Naive thymus-derived CD4-positive, alpha-beta T cell (primary cell): ENCODE measurements at regions of chr7 and their contacts with region 1.

Region 1: DNA sequence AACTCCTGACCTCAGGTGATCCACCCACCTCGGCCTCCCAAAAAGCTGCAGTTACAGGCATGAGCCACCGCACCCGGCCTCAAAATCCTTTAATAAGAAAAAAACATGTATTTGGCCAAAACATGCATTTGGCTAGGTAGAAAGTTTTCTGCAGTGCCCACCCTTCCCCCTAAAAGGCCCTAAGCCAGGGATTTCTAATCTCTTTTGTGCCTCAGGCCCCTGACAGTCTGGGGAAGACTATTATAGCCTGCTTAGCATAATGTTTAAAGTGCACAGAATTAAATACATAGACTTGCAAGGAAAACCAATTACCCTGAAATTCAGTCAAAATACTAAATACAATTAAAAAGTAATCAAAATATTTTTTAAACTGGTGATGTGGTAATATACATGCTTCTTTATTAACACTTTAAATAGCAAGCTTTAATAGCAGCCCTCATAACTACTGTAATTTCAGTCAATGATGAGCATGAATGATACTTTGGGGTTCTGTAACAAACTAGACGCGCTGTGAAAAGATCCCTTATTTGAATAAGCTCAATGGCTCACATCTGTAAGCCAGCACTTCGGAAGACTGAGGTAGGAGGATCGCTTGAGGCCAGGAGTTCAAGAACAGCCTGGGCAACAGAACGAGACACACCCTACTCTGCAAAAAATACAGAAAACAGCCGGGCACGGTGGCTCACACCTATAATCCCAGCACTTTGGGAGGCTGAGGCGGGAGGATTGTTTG is 29.9 kb downstream of the SPDYE6 start:
- DNase-seq: no peak
- ATAC-seq: no peak
- H3K4me3 ChIP-seq: no peak overlapping the region
- H3K4me3 Mint-ChIP-seq: no peak overlapping the region
- H3K27ac ChIP-seq: no peak overlapping the region
- H3K27ac Mint-ChIP-seq: no peak overlapping the region
- H3K4me1 ChIP-seq: no peaks in the 10 kb centered on the region
- H3K4me1 Mint-ChIP-seq: peaks cover 0 to 6% (median 0%) of the 10 kb centered on the region in 7 donors
- H3K27me3 ChIP-seq: no peaks in the 10 kb centered on the region
- H3K27me3 Mint-ChIP-seq: peaks cover 0 to 19% (median 11%) of the 10 kb centered on the region in 5 donors

Region 2: GRCh38 chr7:101991860-101992259 is 334.5 kb before region 1 on chr7:
- CTCF ChIA-PET with region 1: no interaction called
- POLR2A ChIA-PET with region 1: interaction called, 10 read pairs
- intact Hi-C with region 1: no loop called
- DNase-seq: no peak
- ATAC-seq: no peak
- H3K4me3 ChIP-seq: no peak overlapping the region
- H3K4me3 Mint-ChIP-seq: no peak overlapping the region
- H3K27ac ChIP-seq: no peak overlapping the region
- H3K27ac Mint-ChIP-seq: peak overlapping the region in 2 of 9 donors; percentile 14 to 19
- H3K4me1 ChIP-seq: peaks cover 0 to 6% of the 10 kb centered on the region in 2 donors
- H3K4me1 Mint-ChIP-seq: peaks cover 7 to 43% (median 29%) of the 10 kb centered on the region in 7 donors
- H3K27me3 ChIP-seq: no peaks in the 10 kb centered on the region
- H3K27me3 Mint-ChIP-seq: no peaks in the 10 kb centered on the region